ENCODE measurements at regions of chr1 and their contacts with region 1.

Region 1: DNA sequence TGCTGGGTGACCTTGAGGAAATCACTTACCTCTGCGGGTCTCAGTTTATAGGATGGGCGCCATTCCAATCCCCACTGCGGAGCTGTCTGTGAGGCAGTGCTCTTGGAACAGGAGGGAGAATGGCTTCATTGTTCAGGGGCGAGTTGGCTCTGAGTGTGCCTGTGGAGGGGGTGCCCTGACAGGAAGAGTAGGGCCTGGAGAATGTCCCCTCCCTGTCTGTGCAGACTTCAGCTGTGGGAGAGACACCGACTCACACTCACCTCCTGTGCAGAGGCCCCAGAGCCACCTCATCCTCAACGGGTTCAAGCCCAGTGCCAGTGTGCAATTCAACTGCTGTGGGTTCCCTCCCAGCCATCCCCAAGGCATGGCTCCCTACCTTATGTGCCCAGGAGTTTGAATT is 17.1 kb downstream of the ADORA1 start:
- DNase-seq: peak in 9 of 10 donors; percentile 53 to 88 (median 81)
- H3K4me3 ChIP-seq: peak overlapping the region in 6 of 59 donors; percentile 8 to 27 (median 14)
- H3K27ac ChIP-seq: peak overlapping the region; percentile 33 to 97 (median 85)
- H3K27me3 ChIP-seq: no peaks in the 10 kb centered on the region
- CTCF ChIP-seq: peak in 7 of 56 donors; percentile 7 to 27 (median 19)

Region 2: DNA sequence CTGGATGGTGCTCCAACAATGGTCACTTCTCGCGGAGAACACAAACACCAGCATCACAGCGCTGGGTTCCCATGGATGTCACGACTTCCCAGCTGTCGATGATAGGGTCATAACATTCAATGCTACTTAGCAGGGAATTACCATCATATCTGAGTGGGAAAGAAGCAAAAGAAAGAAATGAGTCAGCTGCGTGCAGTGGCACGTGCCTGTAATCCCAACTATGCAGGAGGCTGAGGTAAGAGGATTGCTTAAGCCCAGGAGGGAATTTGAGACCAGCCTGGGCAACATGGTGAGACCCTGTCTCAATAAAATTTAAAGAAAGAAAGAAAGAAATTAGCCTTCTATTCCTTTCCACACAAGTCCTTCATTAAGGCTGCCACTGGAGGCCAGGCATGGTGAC is 252.2 kb before region 1 on chr1:
- intact Hi-C with region 1: no loop called
- DNase-seq: no peak
- H3K4me3 ChIP-seq: no peak overlapping the region
- H3K27ac ChIP-seq: no peak overlapping the region
- H3K27me3 ChIP-seq: no peaks in the 10 kb centered on the region
- CTCF ChIP-seq: no peak

Region 3: DNA sequence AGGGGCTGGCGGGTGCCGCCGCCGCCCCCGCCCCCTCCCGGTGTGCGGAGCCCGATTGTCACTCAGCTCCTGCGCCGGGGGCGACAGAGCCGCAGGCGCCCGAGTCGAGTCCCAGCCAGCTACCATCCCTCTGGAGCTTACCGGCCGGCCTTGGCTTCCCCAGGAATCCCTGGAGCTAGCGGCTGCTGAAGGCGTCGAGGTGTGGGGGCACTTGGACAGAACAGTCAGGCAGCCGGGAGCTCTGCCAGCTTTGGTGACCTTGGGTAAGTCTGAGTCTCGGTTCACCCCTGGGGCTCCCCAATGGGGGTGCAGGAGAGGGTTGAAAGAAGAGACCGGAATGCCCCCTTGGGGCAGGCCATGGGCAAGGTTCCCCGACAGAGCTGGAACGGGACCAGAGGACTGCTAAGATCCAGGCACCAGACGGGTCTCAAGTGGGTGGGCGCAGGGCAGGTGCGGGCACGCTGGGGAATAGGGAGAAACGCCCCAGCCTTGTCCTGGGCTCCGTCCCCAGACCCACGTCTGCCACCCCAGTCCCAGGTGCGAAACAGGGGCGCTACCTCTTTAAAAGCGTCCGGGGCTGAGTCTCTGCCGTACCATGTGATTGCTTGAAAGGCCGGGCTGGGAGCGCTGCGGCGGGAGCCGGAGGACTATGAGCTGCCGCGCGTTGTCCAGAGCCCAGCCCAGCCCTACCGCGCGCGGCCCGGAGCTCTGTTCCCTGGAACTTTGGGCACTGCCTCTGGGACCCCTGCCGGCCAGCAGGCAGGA is 16.8 kb before region 1 on chr1 and contains the start of gene ADORA1:
- intact Hi-C with region 1: loop called in 1 of 2 experiments (anchors 2 kb)
- DNase-seq: peak; percentile 69 to 91 (median 88)
- H3K4me3 ChIP-seq: peak within 1 kb of the TSS; percentile 48 to 93 (median 77)
- H3K27ac ChIP-seq: peak within 1 kb of the TSS; percentile 81 to 100 (median 97)
- H3K27me3 ChIP-seq: no peaks in the 10 kb centered on the region
- CTCF ChIP-seq: peak in 21 of 56 donors; percentile 4 to 40 (median 20)
- total RNA-seq, gene ADORA1: 45.1 to 109 (median 75.9) TPM